ENCODE measurements at regions of chr11 and their contacts with region 1.

Region 1: GRCh38 chr11:121591405-121592033 is 138.8 kb upstream of the SORL1-AS1 start:
- DNase-seq: peak; percentile 79
- H3K4me3 ChIP-seq: no peak overlapping the region
- H3K27ac ChIP-seq: no peak overlapping the region
- H3K4me1 ChIP-seq: peaks cover 4% of the 10 kb centered on the region
- H3K27me3 ChIP-seq: peaks cover 12 to 15% of the 10 kb centered on the region in 2 experiments
- CTCF ChIP-seq: peak; percentile 76
- POLR2A ChIP-seq: no peak

Region 2: DNA sequence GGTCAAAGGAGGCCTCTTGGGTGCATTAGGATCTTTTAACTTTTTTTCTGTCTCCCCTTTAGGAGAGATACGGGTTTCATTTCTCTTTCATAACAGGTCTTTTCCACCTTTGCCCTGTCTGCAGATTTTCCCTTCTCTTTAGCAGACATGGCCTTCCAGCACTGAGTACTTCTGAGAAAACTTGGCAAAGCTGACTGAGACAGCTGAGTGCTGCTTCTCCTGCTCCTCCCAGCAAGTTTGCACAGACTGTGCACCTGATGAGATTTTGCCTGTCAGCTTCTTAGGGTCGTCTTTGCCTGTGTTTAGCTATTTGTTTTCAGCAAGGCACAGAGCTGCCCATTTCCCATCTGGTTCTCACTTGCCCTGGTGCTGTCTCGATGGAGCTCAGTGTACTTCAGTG is 655.2 kb before region 1 on chr11:
- CTCF ChIA-PET with region 1: interaction called, 3 read pairs
- POLR2A ChIA-PET with region 1: no interaction called
- dilution Hi-C with region 1: no loop called
- intact Hi-C with region 1: loop called (anchors 5 kb)
- DNase-seq: no peak
- H3K4me3 ChIP-seq: no peak overlapping the region
- H3K27ac ChIP-seq: no peak overlapping the region
- H3K4me1 ChIP-seq: no peaks in the 10 kb centered on the region
- H3K27me3 ChIP-seq: no peaks in the 10 kb centered on the region
- CTCF ChIP-seq: no peak
- POLR2A ChIP-seq: no peak

Region 3: GRCh38 chr11:121194731-121195596 is 396.6 kb before region 1 on chr11:
- CTCF ChIA-PET with region 1: interaction called, 8 read pairs
- POLR2A ChIA-PET with region 1: no interaction called
- dilution Hi-C with region 1: no loop called
- intact Hi-C with region 1: loop called (anchors 1 kb)
- DNase-seq: peak; percentile 64
- H3K4me3 ChIP-seq: peak overlapping the region in 1 of 3 experiments; percentile 22
- H3K27ac ChIP-seq: no peak overlapping the region
- H3K4me1 ChIP-seq: peaks cover 5% of the 10 kb centered on the region
- H3K27me3 ChIP-seq: no peaks in the 10 kb centered on the region
- CTCF ChIP-seq: peak; percentile 68 to 76
- POLR2A ChIP-seq: no peak

Region 4: DNA sequence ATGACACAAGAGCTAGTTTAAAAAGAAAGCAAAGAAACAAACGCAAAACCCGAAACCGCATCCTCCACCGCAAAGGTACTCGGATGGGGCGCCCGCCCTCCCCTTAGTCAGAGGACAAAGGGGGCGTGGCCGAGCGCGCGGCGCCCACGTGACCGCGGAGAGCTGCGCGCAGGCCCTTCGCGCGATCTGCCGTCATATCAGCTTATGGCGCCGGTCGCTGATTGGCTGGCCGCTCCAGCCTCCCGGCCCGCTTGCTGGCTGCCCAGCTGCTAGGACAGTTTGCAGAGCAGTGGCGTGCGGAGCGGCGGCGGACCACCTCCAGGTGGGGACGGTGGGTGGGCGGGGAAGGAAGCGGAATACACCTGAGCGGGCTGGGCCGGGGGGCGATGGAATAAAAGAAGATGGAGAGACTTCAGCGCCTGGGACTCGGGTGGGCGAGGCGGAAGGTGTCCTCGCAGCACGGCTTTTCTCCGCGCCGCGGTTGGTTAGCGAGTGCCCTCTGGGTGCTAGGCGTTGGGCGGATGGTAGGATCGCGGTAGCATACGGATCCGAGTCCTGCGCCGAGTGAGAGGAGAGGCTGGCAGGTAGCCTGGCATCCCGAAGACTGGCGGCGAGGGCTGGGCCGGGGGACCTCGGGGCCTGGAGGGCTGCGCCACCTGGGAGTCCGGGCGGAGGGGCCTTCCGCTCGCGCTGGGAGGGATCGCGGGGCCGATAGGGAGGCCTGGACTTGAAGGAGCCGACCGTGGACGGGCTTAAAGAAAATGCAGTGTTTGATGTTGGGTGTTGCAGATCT is 298.8 kb before region 1 on chr11 and contains the start of gene SC5D:
- CTCF ChIA-PET with region 1: interaction called, 14 read pairs
- POLR2A ChIA-PET with region 1: no interaction called
- dilution Hi-C with region 1: no loop called
- intact Hi-C with region 1: loop called (anchors 1 kb)
- DNase-seq: peak; percentile 94
- H3K4me3 ChIP-seq: peak within 1 kb of the TSS; percentile 50 to 92 (median 86)
- H3K27ac ChIP-seq: peak within 1 kb of the TSS; percentile 58
- H3K4me1 ChIP-seq: peaks cover 15% of the 10 kb centered on the region
- H3K27me3 ChIP-seq: peaks cover 3% of the 10 kb centered on the region in 2 experiments
- CTCF ChIP-seq: no peak
- POLR2A ChIP-seq: peak; percentile 81
- total RNA-seq, gene SC5D: 40.0 and 40.2 TPM in 2 replicates

Region 5: DNA sequence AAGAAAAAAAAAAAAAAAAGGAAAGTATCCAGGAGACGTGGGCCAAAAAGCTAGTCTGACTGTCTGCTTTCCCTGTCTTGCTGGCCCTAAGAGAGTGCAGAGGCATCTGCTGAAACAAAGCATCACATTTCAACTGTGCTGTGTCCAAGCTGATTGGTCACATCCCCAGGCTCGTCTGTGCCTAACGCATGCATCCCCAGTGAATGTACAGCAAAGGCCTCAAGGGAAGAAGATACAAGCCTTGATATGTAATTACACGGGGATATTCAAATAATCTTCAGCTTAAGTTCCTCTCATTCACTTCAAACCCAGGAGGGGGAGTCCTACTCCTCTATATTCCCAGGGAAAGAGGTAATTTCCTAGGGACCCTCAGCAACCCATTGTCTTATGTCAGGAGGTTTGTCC is 144.8 kb before region 1 on chr11:
- CTCF ChIA-PET with region 1: interaction called, 75 read pairs
- POLR2A ChIA-PET with region 1: no interaction called
- dilution Hi-C with region 1: no loop called
- intact Hi-C with region 1: loop called (anchors 1 kb)
- DNase-seq: peak; percentile 10
- H3K4me3 ChIP-seq: no peak overlapping the region
- H3K27ac ChIP-seq: no peak overlapping the region
- H3K4me1 ChIP-seq: no peaks in the 10 kb centered on the region
- H3K27me3 ChIP-seq: peaks cover 16 to 18% of the 10 kb centered on the region in 2 experiments
- CTCF ChIP-seq: no peak
- POLR2A ChIP-seq: no peak

Region 6: DNA sequence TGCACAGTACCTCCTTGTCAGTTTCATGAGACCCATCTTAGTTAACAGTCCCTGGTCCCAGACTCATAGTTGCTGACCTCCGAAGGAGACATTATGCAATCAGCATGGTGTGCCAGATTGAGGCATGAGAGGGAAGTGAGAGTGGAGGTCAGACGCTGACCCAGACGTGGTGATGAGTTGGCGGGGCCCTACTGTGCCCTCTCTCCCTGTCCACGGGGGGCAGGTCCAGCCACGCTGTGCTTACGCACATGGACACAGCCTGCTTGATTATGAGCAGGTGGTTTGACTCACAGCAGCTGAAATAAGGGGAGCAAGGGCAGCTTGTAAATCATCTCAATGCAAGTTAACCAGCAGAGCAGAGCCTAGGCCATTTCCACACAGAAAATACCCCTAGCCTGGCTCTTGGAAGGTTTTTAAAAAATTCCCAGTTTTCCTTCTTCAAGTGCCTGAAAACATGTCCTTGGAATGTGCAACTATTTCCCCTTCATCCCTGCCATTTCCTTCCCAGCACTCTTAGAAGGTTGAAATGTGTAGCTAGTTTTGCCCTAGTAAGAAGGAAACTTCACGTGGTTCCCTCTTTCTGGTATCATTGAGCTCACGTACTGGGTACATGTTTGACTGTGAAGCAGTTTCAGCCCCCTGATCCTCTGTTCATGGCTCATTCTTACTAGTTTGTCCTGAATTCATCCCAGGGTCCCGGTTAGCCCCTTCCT is 16.1 kb before region 1 on chr11:
- CTCF ChIA-PET with region 1: interaction called, 13 read pairs
- POLR2A ChIA-PET with region 1: no interaction called
- dilution Hi-C with region 1: no loop called
- intact Hi-C with region 1: no loop called
- DNase-seq: no peak
- H3K4me3 ChIP-seq: no peak overlapping the region
- H3K27ac ChIP-seq: no peak overlapping the region
- H3K4me1 ChIP-seq: no peaks in the 10 kb centered on the region
- H3K27me3 ChIP-seq: no peaks in the 10 kb centered on the region
- CTCF ChIP-seq: no peak
- POLR2A ChIP-seq: no peak